ENCODE measurements at regions of chr11 and their contacts with region 1.

Region 1: GRCh38 chr11:80771017-80771416 is 1330.2 kb upstream of the TENM4 start:
- DNase-seq: no peak
- ATAC-seq: no peak
- H3K4me3 ChIP-seq: no peak overlapping the region
- H3K27ac ChIP-seq: no peak overlapping the region
- H3K4me1 ChIP-seq: no peaks in the 10 kb centered on the region
- H3K27me3 ChIP-seq: no peaks in the 10 kb centered on the region
- CTCF ChIP-seq: no peak

Region 2: GRCh38 chr11:80815752-80816453 is 44.9 kb after region 1 on chr11:
- intact Hi-C with region 1: loop called in 1 of 2 experiments (anchors 2 kb)
- DNase-seq: no peak
- ATAC-seq: no peak
- H3K4me3 ChIP-seq: no peak overlapping the region
- H3K27ac ChIP-seq: no peak overlapping the region
- H3K4me1 ChIP-seq: no peaks in the 10 kb centered on the region
- H3K27me3 ChIP-seq: no peaks in the 10 kb centered on the region
- CTCF ChIP-seq: no peak

Region 3: DNA sequence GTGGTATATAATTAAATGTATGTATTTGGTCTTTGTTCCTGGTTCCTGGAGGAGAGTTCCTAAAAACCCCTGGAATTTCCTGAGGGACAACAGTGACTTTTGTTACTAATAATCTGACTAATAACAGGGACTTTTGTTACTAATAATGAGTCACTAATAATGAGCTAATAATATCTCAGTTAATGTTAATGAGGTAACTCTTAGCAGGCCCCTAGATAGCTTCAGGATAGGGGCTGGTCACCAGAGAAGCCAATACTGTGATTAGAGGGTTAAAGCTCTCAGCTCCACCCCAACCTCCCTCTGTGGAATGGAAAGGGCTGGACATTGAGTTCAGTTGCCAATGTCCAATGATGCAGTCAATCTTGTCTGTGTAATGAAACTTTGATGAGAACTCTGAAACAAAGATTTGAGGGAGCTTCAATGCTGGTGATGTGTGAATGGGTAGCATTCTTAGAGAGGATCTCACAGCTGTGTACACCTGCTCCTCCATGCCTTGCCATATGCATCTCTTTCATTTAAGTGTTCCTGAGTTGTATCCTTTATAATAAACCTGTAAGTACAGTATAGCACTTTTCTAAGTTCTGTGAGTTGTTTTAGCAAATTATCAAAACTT is 101.2 kb after region 1 on chr11:
- intact Hi-C with region 1: no loop called
- DNase-seq: no peak
- ATAC-seq: no peak
- H3K4me3 ChIP-seq: no peak overlapping the region
- H3K27ac ChIP-seq: no peak overlapping the region
- H3K4me1 ChIP-seq: no peaks in the 10 kb centered on the region
- H3K27me3 ChIP-seq: no peaks in the 10 kb centered on the region
- CTCF ChIP-seq: no peak

Region 4: DNA sequence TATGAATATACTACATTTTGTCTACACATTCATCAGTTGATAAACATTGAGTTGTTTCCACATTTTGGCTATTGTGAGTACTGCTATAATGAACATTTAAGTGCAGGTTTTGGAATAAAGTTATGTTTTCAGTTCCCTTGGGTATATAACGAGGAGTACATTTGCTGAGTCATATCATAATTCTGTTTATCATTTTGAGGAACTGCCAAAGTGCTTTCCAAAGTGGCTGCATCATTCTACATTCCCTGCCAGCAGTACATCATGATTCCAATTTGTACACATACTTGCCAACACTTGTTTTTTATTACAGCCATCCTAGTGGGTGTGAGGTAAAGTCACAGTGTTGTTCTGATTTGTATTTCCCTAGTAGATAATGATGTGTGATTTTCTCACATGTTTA is 128.4 kb after region 1 on chr11:
- intact Hi-C with region 1: no loop called
- DNase-seq: no peak
- ATAC-seq: peak in 1 of 4 donors; percentile 71
- H3K4me3 ChIP-seq: no peak overlapping the region
- H3K27ac ChIP-seq: no peak overlapping the region
- H3K4me1 ChIP-seq: no peaks in the 10 kb centered on the region
- H3K27me3 ChIP-seq: no peaks in the 10 kb centered on the region
- CTCF ChIP-seq: no peak